Calu3 (cell line): ENCODE measurements at regions of chrX and their contacts with region 1.

Region 1: GRCh38 chrX:40651620-40652223 is 4.4 kb upstream of the CXorf38 start:
- DNase-seq: peak; percentile 71
- H3K4me3 Mint-ChIP-seq: no peak overlapping the region
- H3K27ac Mint-ChIP-seq: peak overlapping the region; percentile 20
- H3K4me1 Mint-ChIP-seq: no peaks in the 10 kb centered on the region
- H3K27me3 Mint-ChIP-seq: no peaks in the 10 kb centered on the region
- CTCF ChIP-seq: peak; percentile 25

Region 2: GRCh38 chrX:40366661-40367060 is 285.1 kb before region 1 on chrX:
- CTCF ChIA-PET with region 1: no interaction called
- intact Hi-C with region 1: no loop called
- DNase-seq: no peak
- H3K4me3 Mint-ChIP-seq: no peak overlapping the region
- H3K27ac Mint-ChIP-seq: no peak overlapping the region
- H3K4me1 Mint-ChIP-seq: no peaks in the 10 kb centered on the region
- H3K27me3 Mint-ChIP-seq: peaks cover 50% of the 10 kb centered on the region
- CTCF ChIP-seq: no peak

Region 3: GRCh38 chrX:40792433-40792832 is 140.7 kb after region 1 on chrX:
- CTCF ChIA-PET with region 1: interaction called, 15 read pairs
- intact Hi-C with region 1: loop called (anchors 2 kb)
- DNase-seq: no peak
- H3K4me3 Mint-ChIP-seq: no peak overlapping the region
- H3K27ac Mint-ChIP-seq: no peak overlapping the region
- H3K4me1 Mint-ChIP-seq: peaks cover 9% of the 10 kb centered on the region
- H3K27me3 Mint-ChIP-seq: peaks cover 8% of the 10 kb centered on the region
- CTCF ChIP-seq: no peak

Region 4: GRCh38 chrX:40922307-40922706 is 270.6 kb after region 1 on chrX:
- CTCF ChIA-PET with region 1: no interaction called
- intact Hi-C with region 1: loop called (anchors 1 kb)
- DNase-seq: peak; percentile 32
- H3K4me3 Mint-ChIP-seq: no peak overlapping the region
- H3K27ac Mint-ChIP-seq: no peak overlapping the region
- H3K4me1 Mint-ChIP-seq: peaks cover 31% of the 10 kb centered on the region
- H3K27me3 Mint-ChIP-seq: no peaks in the 10 kb centered on the region
- CTCF ChIP-seq: peak; percentile 14